IMR-90 (cell line): ENCODE measurements at regions of chr5 and their contacts with region 1.

Region 1: DNA sequence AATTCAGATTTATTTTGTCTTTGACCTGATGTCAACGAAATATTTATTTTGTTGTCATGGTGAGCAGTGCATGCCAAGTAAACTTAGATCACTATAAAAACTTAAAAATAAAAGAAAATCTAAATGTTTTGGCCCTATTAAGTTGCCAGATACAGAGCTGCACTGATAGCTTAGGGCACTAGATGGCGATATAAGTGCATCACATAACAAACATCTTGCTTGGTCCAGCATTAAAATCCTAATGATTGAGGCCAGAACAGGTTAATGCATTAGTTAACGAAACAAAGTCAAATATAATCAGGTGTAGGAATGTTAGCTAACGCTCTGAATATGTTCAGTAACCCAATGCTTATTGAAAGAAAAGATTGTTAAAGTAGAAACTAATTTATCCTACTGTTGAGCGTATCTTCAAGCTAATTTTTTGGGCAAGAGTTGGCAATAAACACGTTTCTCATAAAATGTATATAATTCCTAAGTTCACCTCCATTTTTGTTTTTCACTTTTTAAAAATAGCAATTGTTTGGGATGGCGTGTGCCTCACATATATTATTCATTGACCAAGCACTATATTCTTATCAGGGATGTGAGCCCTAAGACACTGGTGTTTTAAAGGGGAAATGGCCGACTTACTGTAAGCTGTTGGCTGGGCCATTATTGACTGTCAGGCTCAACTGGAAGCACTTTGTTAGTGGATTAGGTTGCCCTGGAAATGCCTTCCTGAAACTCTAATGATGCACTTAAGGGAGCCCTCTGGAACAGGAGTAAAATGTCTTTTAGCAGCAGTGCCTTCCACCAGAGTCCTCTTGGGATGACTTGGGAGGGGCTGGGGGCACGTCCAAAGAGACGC is 33.3 kb downstream of the KCTD16 start:
- DNase-seq: peak; percentile 82
- ATAC-seq: peak; percentile 65
- H3K4me3 ChIP-seq: no peak overlapping the region
- H3K27ac ChIP-seq: no peak overlapping the region
- H3K4me1 ChIP-seq: 0 out of 2 replicates have a peak, but pooled peaks cover 2% of the 10 kb centered on the region
- H3K27me3 ChIP-seq: peaks cover 12% of the 10 kb centered on the region
- CTCF ChIP-seq: peak; percentile 94
- POLR2A ChIP-seq: no peak
- RAD21 ChIP-seq: peak; percentile 88

Region 2: DNA sequence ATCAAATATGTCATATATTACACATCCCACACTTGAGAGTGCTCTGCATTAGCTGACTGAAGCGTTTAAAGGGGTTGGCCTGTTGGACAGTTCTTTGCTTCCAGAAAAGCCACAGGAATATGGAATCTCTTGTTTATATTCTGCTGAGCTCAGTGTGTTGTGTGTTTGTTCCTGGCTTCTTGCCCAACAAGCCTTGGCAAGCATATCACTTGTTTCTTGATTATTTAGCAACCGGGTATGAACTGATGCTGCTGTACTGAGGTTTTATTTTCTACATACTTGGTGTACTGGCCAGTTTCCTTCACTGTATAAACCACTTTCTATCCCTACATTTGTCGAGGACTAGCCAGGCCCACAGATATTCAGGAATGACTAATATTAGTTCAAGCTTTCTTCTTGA is 345.6 kb after region 1 on chr5:
- CTCF ChIA-PET with region 1: no interaction called
- POLR2A ChIA-PET with region 1: no interaction called
- dilution Hi-C with region 1: no loop called
- in situ Hi-C with region 1: no loop called
- intact Hi-C with region 1: loop called (anchors 5 kb)
- DNase-seq: peak; percentile 69
- ATAC-seq: peak; percentile 96
- H3K4me3 ChIP-seq: no peak overlapping the region
- H3K27ac ChIP-seq: no peak overlapping the region
- H3K4me1 ChIP-seq: no peaks in the 10 kb centered on the region
- H3K27me3 ChIP-seq: no peaks in the 10 kb centered on the region
- CTCF ChIP-seq: no peak
- POLR2A ChIP-seq: no peak
- RAD21 ChIP-seq: no peak

Region 3: GRCh38 chr5:145237843-145238242 is 1033.9 kb after region 1 on chr5:
- CTCF ChIA-PET with region 1: no interaction called
- POLR2A ChIA-PET with region 1: interaction called, 5 read pairs
- dilution Hi-C with region 1: no loop called
- in situ Hi-C with region 1: no loop called
- intact Hi-C with region 1: loop called (anchors 5 kb)
- DNase-seq: peak; percentile 24
- ATAC-seq: no peak
- H3K4me3 ChIP-seq: no peak overlapping the region
- H3K27ac ChIP-seq: no peak overlapping the region
- H3K4me1 ChIP-seq: no peaks in the 10 kb centered on the region; the same call in 1 of the 2 replicates
- H3K27me3 ChIP-seq: no peaks in the 10 kb centered on the region
- CTCF ChIP-seq: peak; percentile 44
- POLR2A ChIP-seq: no peak
- RAD21 ChIP-seq: peak; percentile 43

Region 4: GRCh38 chr5:145825751-145826180 is 1621.8 kb after region 1 on chr5:
- CTCF ChIA-PET with region 1: interaction called, 3 read pairs
- POLR2A ChIA-PET with region 1: no interaction called
- dilution Hi-C with region 1: no loop called
- in situ Hi-C with region 1: loop called (anchors 5 kb)
- intact Hi-C with region 1: loop called (anchors 2 kb)
- DNase-seq: peak; percentile 69
- ATAC-seq: peak; percentile 84
- H3K4me3 ChIP-seq: no peak overlapping the region
- H3K27ac ChIP-seq: no peak overlapping the region
- H3K4me1 ChIP-seq: peaks cover 4% of the 10 kb centered on the region
- H3K27me3 ChIP-seq: no peaks in the 10 kb centered on the region
- CTCF ChIP-seq: peak; percentile 98
- POLR2A ChIP-seq: 0 out of 2 replicates have a peak, but pooled peaks have one; percentile 26
- RAD21 ChIP-seq: peak; percentile 81

Region 5: DNA sequence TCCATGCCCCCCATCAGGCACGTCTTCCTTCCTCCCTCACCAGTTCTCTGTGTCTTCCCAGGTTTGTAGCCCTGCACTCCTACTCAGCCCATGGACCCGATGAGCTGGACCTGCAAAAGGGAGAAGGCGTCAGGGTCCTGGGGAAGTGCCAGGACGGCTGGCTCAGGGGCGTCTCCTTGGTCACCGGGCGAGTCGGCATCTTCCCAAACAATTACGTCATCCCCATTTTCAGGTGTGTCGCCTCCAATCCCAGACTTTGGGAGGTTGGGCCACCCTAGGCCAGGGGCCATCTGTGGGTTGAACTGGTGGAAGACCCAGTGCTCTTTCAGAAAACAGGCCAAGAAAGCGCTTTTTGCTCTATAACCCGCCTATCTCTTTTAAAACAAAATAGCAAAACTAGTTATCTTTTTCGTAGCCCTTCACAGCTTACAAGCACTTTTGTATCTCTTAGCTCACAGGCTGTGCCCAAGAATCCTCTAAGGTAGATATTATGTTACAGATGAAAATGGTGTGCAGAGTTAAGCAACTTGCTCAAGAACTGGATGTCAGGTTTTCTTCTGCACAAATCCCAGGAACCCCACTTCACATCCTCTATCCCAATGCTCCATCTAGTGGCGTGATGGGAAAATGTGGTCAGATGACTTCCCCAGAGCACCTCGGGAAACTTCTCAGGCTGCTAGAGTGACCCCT is 1845.2 kb after region 1 on chr5:
- CTCF ChIA-PET with region 1: no interaction called
- POLR2A ChIA-PET with region 1: no interaction called
- dilution Hi-C with region 1: no loop called
- in situ Hi-C with region 1: loop called (anchors 10 kb)
- intact Hi-C with region 1: loop called (anchors 1 kb)
- DNase-seq: peak; percentile 84
- ATAC-seq: peak; percentile 92
- H3K4me3 ChIP-seq: no peak overlapping the region
- H3K27ac ChIP-seq: no peak overlapping the region
- H3K4me1 ChIP-seq: no peaks in the 10 kb centered on the region
- H3K27me3 ChIP-seq: no peaks in the 10 kb centered on the region
- CTCF ChIP-seq: peak; percentile 88
- POLR2A ChIP-seq: 0 out of 2 replicates have a peak, but pooled peaks have one; percentile 64
- RAD21 ChIP-seq: peak; percentile 96